Dorsolateral prefrontal cortex (tissue), 120 donors: ENCODE measurements at regions of chr4 and their contacts with region 1.

Region 1: DNA sequence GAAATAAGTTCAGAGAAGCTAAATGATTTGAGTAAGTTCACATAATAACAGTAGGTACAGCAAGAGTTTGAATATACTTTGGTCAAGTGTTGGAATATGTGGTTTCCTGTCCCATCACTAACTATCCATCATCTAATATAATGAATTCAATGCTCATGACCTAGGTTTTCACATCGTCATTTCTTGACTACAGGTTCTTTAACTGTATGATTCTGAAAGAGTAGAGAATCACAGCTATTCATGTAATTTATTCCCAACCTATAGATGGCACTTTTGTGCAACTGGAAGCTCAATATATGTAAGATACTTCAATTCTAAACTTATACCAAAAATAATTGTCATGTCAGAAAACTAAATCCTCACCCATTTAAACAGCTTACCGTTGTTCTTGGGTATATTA is 53.1 kb downstream of the TIGD2 start:
- DNase-seq: no peak
- H3K4me3 ChIP-seq: no peak overlapping the region
- H3K27ac ChIP-seq: no peak overlapping the region
- H3K27me3 ChIP-seq: peaks cover 0 to 7% (median 0%) of the 10 kb centered on the region in 45 donors
- CTCF ChIP-seq: no peak

Region 2: DNA sequence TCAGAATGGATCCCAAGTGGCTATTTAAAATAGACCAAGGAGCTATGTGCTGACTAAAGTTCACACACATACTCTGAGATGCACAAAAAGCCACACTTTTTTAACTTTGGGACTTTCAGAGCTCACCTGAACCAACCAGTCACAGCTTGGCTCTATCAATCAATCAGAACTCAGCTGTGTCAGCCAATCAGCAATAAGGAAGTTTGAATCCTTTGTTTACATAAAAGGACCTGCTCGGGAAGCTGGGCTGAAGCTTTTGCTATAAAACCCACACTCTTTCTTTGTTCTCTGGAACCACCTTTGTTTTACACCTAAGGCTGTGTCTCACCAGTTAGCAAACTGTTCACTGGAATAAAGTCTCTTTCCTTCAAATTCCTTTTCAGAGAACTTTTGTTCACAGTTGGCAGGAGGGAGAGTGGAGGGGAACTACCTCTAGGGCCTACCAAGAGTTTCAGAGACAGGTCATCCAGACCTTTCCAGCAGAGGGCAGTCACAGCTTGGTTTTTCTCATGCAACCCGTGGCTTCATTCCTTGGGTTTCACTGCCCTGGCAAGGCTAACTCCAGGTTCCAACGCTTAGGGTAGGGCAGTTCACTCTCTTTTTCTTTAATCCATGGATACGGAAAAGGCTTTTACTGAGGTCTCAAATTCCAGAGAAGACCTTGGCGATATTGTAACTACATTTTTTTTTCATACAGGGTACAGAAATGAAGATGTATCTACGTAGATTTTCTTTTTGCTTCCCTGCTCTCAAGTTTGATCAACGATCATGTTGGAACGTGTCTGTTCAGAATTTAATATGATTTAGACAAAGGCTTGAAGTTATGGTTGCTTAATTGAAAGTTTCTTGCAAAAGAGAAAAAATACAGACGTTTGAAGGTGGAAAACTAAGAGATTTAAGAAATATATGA is 62.5 kb after region 1 on chr4:
- intact Hi-C with region 1: loop called in 1 of 2 experiments (anchors 10 kb)
- DNase-seq: peak; percentile 36 to 86 (median 76)
- H3K4me3 ChIP-seq: peak overlapping the region in 6 of 59 donors; percentile 2 to 22 (median 18)
- H3K27ac ChIP-seq: no peak overlapping the region
- H3K27me3 ChIP-seq: no peaks in the 10 kb centered on the region
- CTCF ChIP-seq: peak; percentile 50 to 91 (median 82)

Region 3: DNA sequence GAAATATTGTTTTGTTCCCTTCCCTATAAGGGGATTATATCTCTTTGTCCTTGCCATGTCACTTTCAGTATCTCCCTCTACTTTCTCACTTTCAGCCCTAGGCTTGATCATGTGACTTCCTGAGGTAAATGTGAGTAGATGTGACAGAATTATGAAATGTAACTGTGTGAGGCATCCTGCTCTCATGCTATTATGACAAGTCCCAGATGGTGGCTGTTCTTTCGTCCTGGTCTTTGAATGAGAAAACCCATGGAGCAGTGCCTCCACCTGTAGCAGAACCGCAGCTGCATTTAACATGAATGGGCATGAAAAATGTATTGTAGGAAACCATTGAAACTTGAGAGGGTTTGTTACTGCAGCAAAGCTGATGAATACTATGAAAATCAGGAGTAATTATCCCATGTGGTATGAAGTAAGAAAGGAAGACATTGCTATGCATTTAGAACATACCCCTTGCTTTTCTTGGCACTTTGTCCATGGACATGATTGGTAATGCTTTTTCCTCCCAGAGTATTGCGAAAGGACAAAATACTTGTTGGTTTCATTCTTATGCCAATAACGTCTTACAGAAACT is 345.4 kb after region 1 on chr4:
- intact Hi-C with region 1: no loop called
- DNase-seq: no peak
- H3K4me3 ChIP-seq: no peak overlapping the region
- H3K27ac ChIP-seq: no peak overlapping the region
- H3K27me3 ChIP-seq: peaks cover 0 to 5% (median 0%) of the 10 kb centered on the region in 45 donors
- CTCF ChIP-seq: no peak